BJ (cell line): ENCODE measurements at regions of chr6 and their contacts with region 1.

Region 1: DNA sequence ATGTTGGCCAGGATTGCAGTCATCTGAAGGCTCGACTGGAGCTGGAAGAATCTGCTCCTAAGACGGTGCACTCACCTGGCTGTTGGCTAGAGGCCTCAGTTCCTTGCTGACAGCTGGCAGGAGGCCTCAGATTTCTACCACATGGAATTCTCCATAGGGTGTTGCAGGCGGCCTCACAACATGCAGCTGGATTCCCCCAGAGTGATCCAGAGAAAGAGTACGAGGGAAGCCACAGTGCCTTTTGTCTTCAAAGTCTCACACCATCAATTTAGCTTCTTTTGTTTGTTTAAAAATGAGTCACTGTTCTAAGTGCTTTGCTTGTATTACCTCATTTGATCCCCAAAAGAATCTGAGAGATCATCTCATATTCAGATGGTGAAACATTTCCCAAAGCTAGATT is 65.5 kb upstream of the FYN start:
- DNase-seq: peak; percentile 44
- H3K4me3 ChIP-seq: no peak overlapping the region
- H3K27me3 ChIP-seq: no peaks in the 10 kb centered on the region
- CTCF ChIP-seq: no peak

Region 2: DNA sequence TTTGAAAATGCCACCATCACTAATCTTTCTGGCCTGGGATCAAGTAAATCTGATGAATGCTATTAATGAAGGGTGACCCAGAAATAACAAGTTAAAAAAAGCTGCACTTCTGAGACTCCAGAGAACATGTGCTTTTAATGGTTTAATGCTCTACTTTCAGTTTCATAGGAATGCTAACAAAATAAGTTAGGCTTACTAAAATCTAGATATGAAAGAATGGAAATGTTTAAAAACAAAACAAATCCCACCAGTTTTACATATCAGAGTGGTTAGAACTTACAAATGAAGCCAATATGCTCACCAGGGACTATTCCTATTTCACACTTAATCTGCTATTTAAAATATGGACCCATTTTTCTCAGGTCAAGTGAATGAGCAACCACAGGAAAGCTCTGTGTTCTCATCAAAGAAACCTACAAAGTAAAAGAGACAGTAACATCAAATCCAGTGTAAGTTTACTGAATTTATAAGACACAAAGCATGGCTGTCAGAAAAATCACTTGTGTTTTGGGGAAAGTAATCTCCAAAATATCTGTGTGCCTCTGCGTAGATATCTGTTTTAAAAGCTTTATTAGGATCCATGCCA is 105.8 kb before region 1 on chr6:
- CTCF ChIA-PET with region 1: no interaction called
- POLR2A ChIA-PET with region 1: no interaction called
- DNase-seq: no peak
- H3K4me3 ChIP-seq: no peak overlapping the region
- H3K27me3 ChIP-seq: no peaks in the 10 kb centered on the region
- CTCF ChIP-seq: no peak

Region 3: GRCh38 chr6:111925296-111925695 is 13.4 kb before region 1 on chr6:
- CTCF ChIA-PET with region 1: interaction called, 10 read pairs
- POLR2A ChIA-PET with region 1: no interaction called
- DNase-seq: peak; percentile 41
- H3K4me3 ChIP-seq: no peak overlapping the region
- H3K27me3 ChIP-seq: no peaks in the 10 kb centered on the region
- CTCF ChIP-seq: no peak